ENCODE measurements at regions of chr1 and their contacts with region 1.

Region 1: GRCh38 chr1:100322436-100323211 is 29.7 kb upstream of the CDC14A start:
- DNase-seq: no peak
- H3K4me3 ChIP-seq: no peak overlapping the region
- H3K27ac ChIP-seq: no peak overlapping the region
- H3K4me1 ChIP-seq: no peaks in the 10 kb centered on the region
- H3K27me3 ChIP-seq: no peaks in the 10 kb centered on the region
- CTCF ChIP-seq: no peak
- POLR2A ChIP-seq: no peak

Region 2: GRCh38 chr1:99669821-99670220 is 652.8 kb before region 1 on chr1:
- intact Hi-C with region 1: loop called (anchors 5 kb)
- DNase-seq: no peak
- H3K4me3 ChIP-seq: no peak overlapping the region
- H3K27ac ChIP-seq: no peak overlapping the region
- H3K4me1 ChIP-seq: no peaks in the 10 kb centered on the region
- H3K27me3 ChIP-seq: no peaks in the 10 kb centered on the region
- CTCF ChIP-seq: no peak
- POLR2A ChIP-seq: no peak

Region 3: GRCh38 chr1:100188617-100189016 is 134.0 kb before region 1 on chr1:
- intact Hi-C with region 1: no loop called
- DNase-seq: no peak
- H3K4me3 ChIP-seq: no peak overlapping the region
- H3K27ac ChIP-seq: no peak overlapping the region
- H3K4me1 ChIP-seq: peaks cover 10% of the 10 kb centered on the region
- H3K27me3 ChIP-seq: no peaks in the 10 kb centered on the region
- CTCF ChIP-seq: no peak
- POLR2A ChIP-seq: no peak

Measured in vagina (tissue), 2 donors.